Activated CD4-positive, alpha-beta T cell treated with anti-CD3 and anti-CD28 coated beads, Interleukin-2, amount 10 ng/mL, durations not matched to agents 24 days and 14 days (primary cell): ENCODE measurements at regions of chr16 and their contacts with region 1.

Region 1: DNA sequence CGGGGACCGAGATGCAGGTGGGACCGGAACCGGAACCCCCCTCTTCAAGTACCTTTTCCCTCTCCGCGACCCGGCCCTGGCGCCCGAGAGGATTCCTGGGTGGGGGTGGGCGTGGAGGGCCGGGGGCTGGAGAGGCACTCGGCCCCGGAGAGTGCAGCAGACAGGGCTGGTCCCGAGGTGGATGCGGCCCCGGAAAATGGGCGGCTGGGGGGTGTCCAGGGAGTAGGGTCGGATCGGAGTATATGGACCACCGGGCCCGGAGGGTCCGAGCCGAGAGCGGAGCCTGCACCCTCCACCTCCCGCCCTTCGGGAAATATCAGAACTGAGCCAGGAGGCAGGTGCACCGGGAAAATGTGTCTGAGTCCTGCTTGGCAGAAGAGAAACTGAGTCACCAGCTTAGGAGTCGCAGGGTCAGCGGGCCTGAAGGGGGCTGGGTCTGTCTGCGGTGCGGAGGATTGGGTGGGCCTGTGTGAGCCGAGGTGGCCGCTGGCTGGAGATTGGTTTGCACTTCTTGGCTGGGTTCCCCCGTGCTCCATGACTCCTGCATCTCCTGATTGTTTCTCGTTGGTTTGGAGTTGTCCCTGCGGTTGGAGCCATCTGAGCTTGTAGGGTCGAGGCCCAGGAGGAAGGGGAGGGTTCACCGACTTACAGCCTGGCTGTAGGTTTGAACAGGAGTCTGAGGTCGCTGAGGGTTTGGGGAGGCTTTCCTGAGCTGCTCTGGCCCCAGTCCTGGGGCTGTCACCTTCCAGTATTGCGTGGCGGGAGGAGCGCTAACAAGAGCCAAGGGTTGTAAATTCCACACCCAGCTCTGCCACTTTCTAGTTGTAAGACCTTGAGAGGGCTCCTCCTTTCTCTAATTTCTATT is 518 bp downstream of the SH2B1 start:
- DNase-seq: peak; percentile 69
- H3K4me3 Mint-ChIP-seq: peak overlapping the region; percentile 100
- H3K27ac Mint-ChIP-seq: peak overlapping the region; percentile 99
- H3K4me1 Mint-ChIP-seq: peaks cover 22% of the 10 kb centered on the region
- H3K27me3 Mint-ChIP-seq: no peaks in the 10 kb centered on the region

Region 2: DNA sequence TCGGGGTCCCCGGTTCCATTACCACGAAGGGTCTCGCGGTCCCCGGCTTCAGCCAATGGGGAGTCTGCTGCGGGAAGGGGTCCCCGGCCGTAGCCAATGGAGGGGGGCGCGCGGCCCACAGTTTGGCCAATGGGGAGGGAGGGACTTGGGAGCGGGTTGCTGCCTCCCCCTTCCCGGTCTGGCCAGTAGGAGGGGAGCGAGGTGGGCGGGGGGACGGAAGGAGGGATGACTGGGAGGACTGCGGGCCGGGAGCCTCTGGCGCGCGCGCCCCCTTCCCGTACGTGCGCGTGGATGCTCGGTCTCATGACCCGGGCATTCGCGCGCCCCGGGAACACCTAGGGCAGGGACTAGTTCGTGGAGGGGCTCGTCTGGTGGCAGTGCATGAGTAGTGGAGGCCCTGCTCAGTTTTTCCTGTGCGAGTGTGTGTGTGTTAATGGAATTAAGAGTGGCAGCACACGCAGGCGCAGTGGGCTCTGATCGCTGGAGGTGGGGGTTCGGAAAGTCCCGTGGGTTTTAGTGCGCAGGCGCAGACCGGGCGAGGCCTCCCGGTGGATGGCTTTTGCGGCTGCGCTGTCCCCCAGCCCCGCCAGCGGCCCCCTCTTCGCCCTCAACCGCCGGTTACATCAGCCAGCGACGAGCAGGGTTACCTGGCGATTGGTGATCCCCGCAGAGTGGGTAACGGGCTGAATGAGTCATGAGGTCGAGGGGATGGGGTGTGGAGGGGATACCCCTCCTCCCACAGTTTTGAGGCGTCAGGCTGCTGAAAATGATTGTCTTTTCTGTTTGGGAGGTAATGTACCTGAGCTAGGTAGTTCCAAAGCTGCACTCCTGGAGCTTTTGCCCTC is 40.1 kb before region 1 on chr16:
- intact Hi-C with region 1: loop called (anchors 1 kb)
- DNase-seq: peak; percentile 98
- H3K4me3 Mint-ChIP-seq: peak overlapping the region; percentile 100
- H3K27ac Mint-ChIP-seq: peak overlapping the region; percentile 100
- H3K4me1 Mint-ChIP-seq: peaks cover 47% of the 10 kb centered on the region
- H3K27me3 Mint-ChIP-seq: peaks cover 2% of the 10 kb centered on the region

Region 3: GRCh38 chr16:28879841-28880588 is 15.9 kb after region 1 on chr16:
- intact Hi-C with region 1: loop called (anchors 1 kb)
- DNase-seq: peak; percentile 95
- H3K4me3 Mint-ChIP-seq: peak overlapping the region; percentile 96
- H3K27ac Mint-ChIP-seq: peak overlapping the region; percentile 81
- H3K4me1 Mint-ChIP-seq: peaks cover 21% of the 10 kb centered on the region
- H3K27me3 Mint-ChIP-seq: no peaks in the 10 kb centered on the region

Region 4: DNA sequence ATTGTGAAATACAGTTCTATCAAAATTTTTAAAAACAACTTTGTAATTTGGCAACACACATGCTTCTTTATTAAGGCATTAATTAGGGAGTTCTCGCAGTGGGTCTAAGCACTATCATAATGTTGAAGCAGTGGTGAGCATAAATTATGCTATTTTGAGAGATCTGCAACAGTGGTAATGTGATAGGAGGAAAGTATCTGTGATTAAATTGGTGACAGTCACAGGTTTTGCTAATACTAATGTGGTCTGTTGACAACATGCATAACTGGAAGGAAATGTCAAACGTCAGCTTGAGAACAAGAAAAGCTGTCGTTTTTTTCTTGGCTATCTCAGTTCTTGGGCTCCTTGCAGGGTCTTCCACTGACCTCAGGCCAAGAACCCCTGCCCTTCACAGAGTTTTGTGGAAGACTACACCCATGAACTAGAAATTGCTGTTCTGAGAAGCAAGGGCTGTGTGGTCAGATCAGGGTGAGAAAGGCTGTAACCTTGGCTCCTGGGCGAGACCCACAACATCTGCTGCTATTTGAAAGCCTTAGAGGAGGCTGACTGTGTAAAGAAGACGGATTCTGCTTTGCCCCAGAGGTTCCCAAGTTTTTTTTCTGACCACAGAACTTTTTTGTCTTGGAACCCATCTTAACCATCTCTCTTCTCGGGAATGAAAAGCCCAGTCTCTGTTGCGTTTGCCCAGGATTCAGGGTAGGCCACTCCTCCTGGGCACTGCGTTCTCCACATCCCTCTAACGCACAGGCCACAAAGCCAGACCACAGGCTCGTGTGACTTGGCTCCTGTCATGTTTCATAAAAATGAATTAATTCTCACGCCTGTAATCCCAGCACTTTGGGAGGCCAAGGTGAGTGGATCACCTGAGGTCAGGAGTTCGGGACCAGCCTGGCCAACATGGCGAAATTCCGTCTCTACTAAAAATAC is 28.1 kb after region 1 on chr16:
- intact Hi-C with region 1: no loop called
- DNase-seq: no peak
- H3K4me3 Mint-ChIP-seq: no peak overlapping the region
- H3K27ac Mint-ChIP-seq: no peak overlapping the region
- H3K4me1 Mint-ChIP-seq: no peaks in the 10 kb centered on the region
- H3K27me3 Mint-ChIP-seq: no peaks in the 10 kb centered on the region

Region 5: GRCh38 chr16:28943281-28943680 is 79.1 kb after region 1 on chr16:
- intact Hi-C with region 1: loop called (anchors 1 kb)
- DNase-seq: no peak
- H3K4me3 Mint-ChIP-seq: no peak overlapping the region
- H3K27ac Mint-ChIP-seq: no peak overlapping the region
- H3K4me1 Mint-ChIP-seq: peaks cover 15% of the 10 kb centered on the region
- H3K27me3 Mint-ChIP-seq: peaks cover 2% of the 10 kb centered on the region

Region 6: DNA sequence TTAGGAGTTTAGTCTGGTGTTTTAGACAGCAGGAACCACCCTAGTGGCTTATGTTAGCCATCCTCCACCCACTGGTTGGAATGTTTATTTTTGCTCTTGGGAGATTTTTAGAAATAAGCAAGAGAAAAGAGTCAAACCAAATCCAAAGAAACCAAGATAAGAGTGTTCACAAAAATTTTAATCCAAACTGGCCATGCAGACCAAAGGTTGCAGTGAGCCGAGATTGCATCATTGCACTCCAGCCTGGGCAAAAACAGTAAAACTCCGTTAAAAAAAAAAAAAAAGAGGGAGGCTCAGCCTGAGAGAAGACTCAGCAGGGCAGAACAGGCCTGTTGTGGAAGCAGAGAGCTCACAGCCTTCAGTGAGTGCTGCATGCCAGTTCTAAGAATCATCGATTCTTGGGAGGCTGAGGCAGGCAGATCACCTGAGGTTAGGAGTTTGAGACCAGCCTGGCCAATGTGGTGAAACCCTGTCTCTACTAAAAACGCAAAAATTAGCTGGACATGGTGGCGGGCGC is 893.8 kb after region 1 on chr16:
- intact Hi-C with region 1: no loop called
- DNase-seq: no peak
- H3K4me3 Mint-ChIP-seq: no peak overlapping the region
- H3K27ac Mint-ChIP-seq: no peak overlapping the region
- H3K4me1 Mint-ChIP-seq: peaks cover 15% of the 10 kb centered on the region
- H3K27me3 Mint-ChIP-seq: no peaks in the 10 kb centered on the region